Gastrocnemius medialis (tissue), 4 donors: ENCODE measurements at regions of chr19 and their contacts with region 1.

Region 1: DNA sequence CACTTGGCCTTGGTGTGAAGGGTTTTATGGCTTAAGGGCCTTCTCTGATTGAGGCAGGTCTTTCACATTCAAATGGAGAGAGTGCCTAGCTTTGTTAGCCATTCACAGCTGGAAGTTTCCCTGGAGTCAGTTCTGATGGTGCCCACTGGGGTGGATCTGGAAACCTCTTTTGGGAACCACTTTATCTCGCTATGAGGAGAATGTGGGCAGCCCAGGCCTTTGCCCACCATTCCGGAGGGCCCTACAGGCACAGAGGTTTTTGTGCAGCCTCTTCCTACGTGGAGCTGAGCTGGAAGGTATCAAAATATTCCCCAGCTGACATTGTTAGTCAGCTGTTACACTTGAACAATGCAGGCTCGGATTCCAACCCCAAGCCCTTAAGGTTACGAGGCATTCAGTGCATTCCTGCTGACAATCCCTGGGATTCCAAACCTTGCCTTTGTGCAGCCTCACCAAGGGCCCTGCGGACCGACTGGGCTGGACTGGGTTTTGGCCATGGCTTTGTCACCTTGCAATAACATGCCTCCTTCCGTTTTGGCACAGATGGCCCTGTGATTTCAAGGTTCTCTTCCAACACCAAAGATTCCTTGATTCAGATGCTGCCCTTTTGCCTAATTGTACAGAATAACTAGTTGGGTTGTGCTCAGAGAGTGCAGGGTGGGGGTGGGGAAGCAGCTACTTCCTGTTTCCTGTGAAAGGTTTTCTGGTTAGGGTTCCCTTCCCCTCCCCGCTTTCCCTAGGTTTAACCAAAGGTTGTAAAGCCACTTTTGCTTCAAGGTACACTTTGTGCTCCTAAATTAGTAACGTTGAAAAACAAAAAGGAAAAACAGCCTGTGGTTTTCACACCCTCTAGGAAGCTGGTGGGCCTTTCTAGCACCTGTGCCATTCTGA is 27.0 kb downstream of the SAE1 start:
- DNase-seq: peak; percentile 2 to 14
- ATAC-seq: peak; percentile 73 to 75
- H3K4me3 ChIP-seq: peak overlapping the region in 1 of 4 donors; percentile 12
- H3K27ac ChIP-seq: peak overlapping the region; percentile 60 to 77 (median 74)
- H3K4me1 ChIP-seq: peaks cover 27 to 32% of the 10 kb centered on the region in 2 donors
- H3K27me3 ChIP-seq: no peaks in the 10 kb centered on the region
- CTCF ChIP-seq: no peak
- POLR2A ChIP-seq: no peak

Region 2: GRCh38 chr19:47190167-47190727 is 32.6 kb after region 1 on chr19:
- in situ Hi-C with region 1: no loop called
- intact Hi-C with region 1: loop called (anchors 5 kb)
- DNase-seq: peak; percentile 7 to 34
- ATAC-seq: peak; percentile 42 to 60
- H3K4me3 ChIP-seq: peak overlapping the region in 2 of 4 donors; percentile 10 to 11
- H3K27ac ChIP-seq: peak overlapping the region; percentile 27 to 69 (median 37)
- H3K4me1 ChIP-seq: peaks cover 9 to 11% of the 10 kb centered on the region in 2 donors
- H3K27me3 ChIP-seq: no peaks in the 10 kb centered on the region
- CTCF ChIP-seq: no peak
- POLR2A ChIP-seq: no peak

Region 3: DNA sequence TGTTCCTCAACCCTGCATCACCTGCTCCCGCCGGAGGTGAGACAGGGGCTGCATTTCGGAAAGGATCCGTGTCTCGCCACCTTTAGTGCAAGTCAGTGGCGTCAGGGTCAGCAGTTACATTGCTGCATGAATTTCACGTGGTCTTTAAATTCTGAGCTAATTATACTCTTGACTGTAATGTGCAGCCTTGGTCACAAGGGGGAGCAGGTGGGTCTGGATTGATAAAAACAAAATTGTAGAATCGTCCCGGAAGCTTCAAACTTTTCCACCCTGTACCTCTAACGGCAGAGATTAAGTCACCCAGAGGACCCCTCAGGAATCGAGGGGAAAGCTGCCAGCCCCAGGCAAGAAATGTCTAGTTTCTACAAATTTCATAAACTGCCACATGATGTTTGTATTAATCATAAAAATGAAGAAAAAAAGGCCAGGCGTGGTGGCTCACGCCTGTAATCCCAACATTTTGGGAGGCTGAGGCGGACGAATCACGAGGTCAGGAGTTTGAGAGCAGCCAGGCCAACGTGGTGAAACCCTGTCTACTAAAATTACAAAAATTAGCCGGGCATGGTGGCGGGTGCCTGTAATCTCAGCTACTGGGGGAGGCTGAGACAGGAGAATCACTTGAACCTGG is 53.1 kb after region 1 on chr19:
- in situ Hi-C with region 1: no loop called
- intact Hi-C with region 1: loop called (anchors 5 kb)
- DNase-seq: peak; percentile 63 to 81
- ATAC-seq: peak; percentile 94 to 95
- H3K4me3 ChIP-seq: no peak overlapping the region
- H3K27ac ChIP-seq: peak overlapping the region in 3 of 4 donors; percentile 48 to 71 (median 51)
- H3K4me1 ChIP-seq: peaks cover 4 to 6% of the 10 kb centered on the region in 2 donors
- H3K27me3 ChIP-seq: no peaks in the 10 kb centered on the region
- CTCF ChIP-seq: peak; percentile 81 to 93 (median 88)
- POLR2A ChIP-seq: no peak